ENCODE measurements at regions of chr7 and their contacts with region 1.

Region 1: GRCh38 chr7:17991866-17992648 is 35.6 kb downstream of the PRPS1L1 start:
- DNase-seq: no peak
- ATAC-seq: no peak
- H3K4me3 Mint-ChIP-seq: no peak overlapping the region
- H3K27ac Mint-ChIP-seq: no peak overlapping the region
- H3K4me1 Mint-ChIP-seq: no peaks in the 10 kb centered on the region
- H3K27me3 Mint-ChIP-seq: peaks cover 2% of the 10 kb centered on the region
- CTCF ChIP-seq: no peak

Region 2: DNA sequence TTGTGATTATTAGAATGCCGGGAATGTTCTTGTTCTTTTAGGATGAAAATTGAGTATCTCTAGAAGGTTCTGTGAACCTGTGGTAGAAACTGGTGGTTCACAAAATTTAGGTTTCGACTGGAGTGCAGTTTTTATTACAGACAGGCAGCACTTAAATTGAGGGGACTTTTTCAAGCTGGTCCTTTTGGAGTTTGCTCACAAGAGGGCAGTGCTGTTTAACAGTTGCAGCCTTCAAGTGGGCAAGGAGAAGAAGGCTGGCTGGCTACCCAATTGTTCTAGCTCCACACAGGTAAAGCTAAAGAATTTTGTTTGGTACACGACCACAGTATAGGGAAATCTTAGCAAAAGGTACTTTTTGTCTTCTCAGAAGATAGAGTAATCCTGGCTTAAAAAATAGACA is 285.3 kb before region 1 on chr7:
- CTCF ChIA-PET with region 1: no interaction called
- POLR2A ChIA-PET with region 1: no interaction called
- intact Hi-C with region 1: loop called (anchors 10 kb)
- DNase-seq: no peak
- ATAC-seq: no peak
- H3K4me3 Mint-ChIP-seq: no peak overlapping the region
- H3K27ac Mint-ChIP-seq: no peak overlapping the region
- H3K4me1 Mint-ChIP-seq: no peaks in the 10 kb centered on the region
- H3K27me3 Mint-ChIP-seq: peaks cover 6% of the 10 kb centered on the region
- CTCF ChIP-seq: no peak

Region 3: GRCh38 chr7:17769918-17770317 is 222.1 kb before region 1 on chr7:
- CTCF ChIA-PET with region 1: interaction called, 3 read pairs
- POLR2A ChIA-PET with region 1: no interaction called
- intact Hi-C with region 1: loop called (anchors 2 kb)
- DNase-seq: no peak
- ATAC-seq: peak; percentile 75
- H3K4me3 Mint-ChIP-seq: no peak overlapping the region
- H3K27ac Mint-ChIP-seq: no peak overlapping the region
- H3K4me1 Mint-ChIP-seq: peaks cover 11% of the 10 kb centered on the region
- H3K27me3 Mint-ChIP-seq: no peaks in the 10 kb centered on the region
- CTCF ChIP-seq: no peak

Region 4: DNA sequence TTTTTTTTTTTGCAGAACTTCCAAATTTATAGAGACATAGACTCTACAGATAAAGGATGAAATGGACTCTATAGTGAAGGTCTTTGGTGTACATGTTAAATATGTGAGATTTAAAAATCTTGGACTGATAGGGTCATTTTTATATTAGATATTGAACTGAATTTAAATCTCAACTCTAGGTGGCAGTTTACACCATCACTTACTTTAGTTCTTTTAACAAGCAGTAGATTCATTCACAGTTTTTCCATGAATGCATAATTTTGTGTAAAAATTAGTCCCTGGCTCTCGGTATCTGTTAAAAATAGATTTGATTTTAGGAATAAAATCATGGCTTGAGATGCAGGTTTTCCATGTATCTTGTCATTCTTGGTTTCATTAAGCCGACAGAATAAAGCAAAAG is 20.6 kb before region 1 on chr7:
- CTCF ChIA-PET with region 1: no interaction called
- POLR2A ChIA-PET with region 1: no interaction called
- intact Hi-C with region 1: no loop called
- DNase-seq: no peak
- ATAC-seq: no peak
- H3K4me3 Mint-ChIP-seq: no peak overlapping the region
- H3K27ac Mint-ChIP-seq: no peak overlapping the region
- H3K4me1 Mint-ChIP-seq: no peaks in the 10 kb centered on the region
- H3K27me3 Mint-ChIP-seq: peaks cover 4% of the 10 kb centered on the region
- CTCF ChIP-seq: no peak